ENCODE measurements at regions of chr7 and their contacts with region 1.

Region 1: DNA sequence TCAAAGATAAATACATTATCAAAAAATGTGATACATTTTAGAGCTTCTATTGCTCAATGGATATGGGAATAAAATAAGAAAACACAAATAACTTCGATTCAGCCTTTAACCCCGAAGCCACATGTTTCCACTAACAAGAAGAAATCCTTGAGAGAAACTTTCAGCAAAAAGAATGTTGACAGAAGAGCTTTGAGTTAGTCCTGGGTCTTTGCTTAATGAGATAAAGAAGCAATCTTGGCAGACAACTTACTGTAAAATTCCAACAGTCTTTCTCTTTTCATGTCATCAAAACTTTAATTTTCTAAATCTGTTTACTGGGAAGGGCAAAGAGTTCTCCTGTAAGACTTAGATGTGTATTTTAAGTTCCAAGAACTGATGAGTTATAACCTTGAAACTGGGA is 810.2 kb downstream of the CNTNAP2 start:
- DNase-seq: no peak
- ATAC-seq: no peak
- H3K4me3 ChIP-seq: no peak overlapping the region
- H3K27ac ChIP-seq: no peak overlapping the region
- H3K4me1 ChIP-seq: no peaks in the 10 kb centered on the region
- H3K27me3 ChIP-seq: no peaks in the 10 kb centered on the region
- CTCF ChIP-seq: no peak

Region 2: DNA sequence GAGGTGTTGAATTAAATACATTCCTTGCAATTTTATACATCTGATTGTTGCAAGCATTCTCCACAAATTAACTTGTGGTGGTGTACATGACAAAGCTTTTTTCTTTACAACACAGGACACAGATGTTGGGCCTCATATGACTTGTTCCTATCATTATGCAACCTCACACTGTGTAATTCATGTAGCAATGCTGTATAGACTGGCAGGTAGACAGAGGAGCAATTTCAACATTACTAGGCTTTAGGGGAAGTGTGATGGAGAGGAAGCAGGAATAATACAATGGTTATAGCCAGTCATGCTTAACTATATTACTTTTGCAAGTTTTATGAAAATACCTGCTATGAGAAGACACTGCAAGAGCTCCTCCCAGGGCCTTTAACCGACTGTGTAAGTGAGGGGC is 21.9 kb after region 1 on chr7:
- CTCF ChIA-PET with region 1: no interaction called
- POLR2A ChIA-PET with region 1: no interaction called
- intact Hi-C with region 1: no loop called
- DNase-seq: no peak
- ATAC-seq: no peak
- H3K4me3 ChIP-seq: no peak overlapping the region
- H3K27ac ChIP-seq: no peak overlapping the region
- H3K4me1 ChIP-seq: no peaks in the 10 kb centered on the region
- H3K27me3 ChIP-seq: no peaks in the 10 kb centered on the region
- CTCF ChIP-seq: no peak

Region 3: GRCh38 chr7:148095066-148095465 is 1168.2 kb after region 1 on chr7:
- CTCF ChIA-PET with region 1: no interaction called
- POLR2A ChIA-PET with region 1: interaction called, 11 read pairs
- intact Hi-C with region 1: no loop called
- DNase-seq: no peak
- ATAC-seq: no peak
- H3K4me3 ChIP-seq: no peak overlapping the region
- H3K27ac ChIP-seq: no peak overlapping the region
- H3K4me1 ChIP-seq: no peaks in the 10 kb centered on the region
- H3K27me3 ChIP-seq: peaks cover 15% of the 10 kb centered on the region; the same call in 1 of the 2 replicates
- CTCF ChIP-seq: no peak

Measured in PC-3 (cell line).